Common myeloid progenitor, CD34-positive (primary cell): ENCODE measurements at regions of chr14 and their contacts with region 1.

Region 1: DNA sequence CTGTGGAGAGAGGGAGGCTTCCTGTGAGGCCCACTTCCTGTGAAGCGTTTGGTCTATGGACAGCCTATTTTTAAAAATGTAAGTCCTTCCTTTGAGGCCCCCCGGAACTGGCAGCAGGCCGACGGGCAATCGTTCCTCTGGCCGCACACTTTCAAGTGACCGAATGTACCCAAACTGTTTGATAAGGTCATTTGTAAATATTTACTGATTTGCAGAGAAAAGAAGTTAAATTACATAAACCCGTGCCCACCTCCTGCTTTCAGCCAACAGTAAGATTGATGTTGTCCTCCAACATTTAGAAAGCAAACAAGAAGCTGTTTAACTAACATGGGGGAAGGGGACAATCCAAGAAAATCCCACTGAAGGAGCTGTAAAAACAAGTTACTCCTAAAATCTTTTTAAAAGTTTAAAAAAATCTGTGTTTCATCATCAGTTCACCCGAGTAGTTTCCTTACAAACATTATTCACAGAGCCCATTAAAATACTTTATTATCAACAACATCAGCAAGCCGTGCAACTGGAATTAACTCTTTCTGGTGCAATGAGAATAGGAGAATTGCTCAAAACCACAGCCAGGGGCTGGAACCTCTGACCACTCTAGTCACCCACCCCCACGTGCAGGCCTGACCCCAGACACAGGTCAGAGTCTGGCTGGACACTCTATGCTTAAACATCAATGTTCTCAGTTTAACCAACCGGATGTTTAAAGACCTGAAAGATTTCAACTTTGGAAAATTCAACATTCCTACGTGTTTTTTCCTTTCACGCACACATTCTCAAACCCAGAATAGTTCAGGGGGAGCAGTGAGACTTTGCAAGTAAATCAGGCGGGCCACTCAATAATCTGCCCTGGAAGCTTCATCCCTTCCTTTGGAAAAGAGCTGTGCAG is 65.3 kb downstream of the FOXN3 start:
- DNase-seq: peak in 1 of 3 donors; percentile 52
- H3K4me3 ChIP-seq: peak overlapping the region in 6 of 7 experiments; percentile 15 to 59 (median 40)
- H3K27ac ChIP-seq: peak overlapping the region; percentile 78 to 84
- H3K4me1 ChIP-seq: peaks cover 28 to 50% (median 46%) of the 10 kb centered on the region in 4 experiments
- H3K27me3 ChIP-seq: no peaks in the 10 kb centered on the region

Region 2: DNA sequence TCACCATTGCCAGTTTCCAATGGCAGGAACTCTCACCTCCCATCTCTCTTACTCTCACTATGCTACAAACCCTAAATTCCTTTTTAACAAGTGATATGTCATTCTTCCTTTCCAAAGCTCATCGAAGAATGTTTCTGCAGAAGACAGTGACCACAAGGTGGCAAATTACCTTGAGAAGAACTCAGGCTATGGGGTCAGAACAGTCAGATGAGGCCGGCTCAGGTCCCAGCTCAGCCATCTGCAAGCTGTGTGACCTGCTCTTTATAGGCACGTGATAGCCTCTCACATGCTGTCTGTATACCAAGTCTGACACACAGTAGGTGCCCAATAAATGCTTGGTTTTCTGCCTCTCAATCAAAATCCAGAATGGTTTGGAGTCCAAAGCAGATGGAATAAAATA is 15.4 kb before region 1 on chr14:
- CTCF ChIA-PET with region 1: interaction called, 12 read pairs
- POLR2A ChIA-PET with region 1: interaction called, 3 read pairs
- DNase-seq: peak; percentile 43 to 49 (median 46)
- H3K4me3 ChIP-seq: no peak overlapping the region
- H3K27ac ChIP-seq: no peak overlapping the region
- H3K4me1 ChIP-seq: peaks cover 4 to 39% (median 19%) of the 10 kb centered on the region in 4 experiments
- H3K27me3 ChIP-seq: no peaks in the 10 kb centered on the region

Region 3: DNA sequence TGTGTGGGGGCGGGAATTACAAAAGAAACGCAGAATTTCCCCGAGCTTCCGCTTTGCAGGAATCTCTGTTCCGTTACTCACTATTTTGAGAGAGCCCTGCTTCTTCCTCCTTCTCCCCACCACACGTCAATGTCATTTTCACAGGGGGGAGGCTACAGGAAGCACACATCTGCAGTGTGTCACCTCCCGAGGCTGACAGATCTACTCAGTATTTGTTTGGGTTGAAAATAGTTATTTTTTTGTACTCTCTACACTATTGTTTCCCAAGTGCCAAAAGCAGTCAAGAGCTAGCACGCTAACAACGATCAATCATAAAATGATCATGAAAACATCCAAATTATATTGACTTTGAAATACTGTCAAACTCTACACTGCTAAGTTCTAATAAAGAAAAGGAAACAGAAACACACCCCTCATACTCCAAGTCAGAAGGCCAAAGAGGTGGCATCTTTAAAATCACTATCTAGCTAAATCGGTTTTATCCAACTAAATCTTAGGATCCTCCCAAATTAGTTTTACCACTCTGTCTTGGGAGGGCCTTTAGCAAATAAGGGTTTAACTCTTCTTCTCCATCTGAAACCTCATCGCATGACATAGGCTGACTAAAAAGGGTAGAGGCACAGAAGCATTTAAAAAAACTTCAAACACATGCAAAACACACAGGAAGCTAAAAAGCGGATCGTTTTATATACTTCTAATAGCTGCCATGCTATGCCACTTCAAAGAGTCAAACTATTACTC is 13.5 kb after region 1 on chr14:
- CTCF ChIA-PET with region 1: interaction called, 12 read pairs
- POLR2A ChIA-PET with region 1: interaction called, 3 read pairs
- DNase-seq: peak; percentile 58 to 90 (median 86)
- H3K4me3 ChIP-seq: peak overlapping the region in 4 of 7 experiments; percentile 30 to 56 (median 46)
- H3K27ac ChIP-seq: peak overlapping the region; percentile 43 to 62
- H3K4me1 ChIP-seq: peaks cover 28 to 54% (median 47%) of the 10 kb centered on the region in 4 experiments
- H3K27me3 ChIP-seq: no peaks in the 10 kb centered on the region

Region 4: GRCh38 chr14:89399594-89400068 is 47.9 kb after region 1 on chr14:
- CTCF ChIA-PET with region 1: no interaction called
- POLR2A ChIA-PET with region 1: no interaction called
- DNase-seq: peak; percentile 64 to 93 (median 90)
- H3K4me3 ChIP-seq: peak overlapping the region in 1 of 7 experiments; percentile 12
- H3K27ac ChIP-seq: peak overlapping the region; percentile 51 to 69
- H3K4me1 ChIP-seq: peaks cover 2 to 30% (median 22%) of the 10 kb centered on the region in 4 experiments
- H3K27me3 ChIP-seq: no peaks in the 10 kb centered on the region